ENCODE measurements at regions of chr2 and their contacts with region 1.

Region 1: GRCh38 chr2:177263451-177264208 is 897 bp downstream of the NFE2L2 start:
- DNase-seq: peak; percentile 97
- H3K4me3 ChIP-seq: peak overlapping the region; percentile 78
- H3K27ac ChIP-seq: peak overlapping the region; percentile 94
- H3K4me1 ChIP-seq: peaks cover 38% of the 10 kb centered on the region
- CTCF ChIP-seq: peak; percentile 82

Region 2: GRCh38 chr2:177212106-177212890 is 51.3 kb before region 1 on chr2 and contains the start of gene HNRNPA3:
- CTCF ChIA-PET with region 1: no interaction called
- POLR2A ChIA-PET with region 1: interaction called, 18 read pairs
- intact Hi-C with region 1: loop called (anchors 1 kb)
- DNase-seq: peak; percentile 98
- H3K4me3 ChIP-seq: peak within 1 kb of the TSS; percentile 81
- H3K27ac ChIP-seq: peak within 1 kb of the TSS; percentile 87
- H3K4me1 ChIP-seq: peaks cover 35% of the 10 kb centered on the region
- CTCF ChIP-seq: peak; percentile 47; the same call in 1 of the 2 replicates
- total RNA-seq, gene HNRNPA3: 68.2 and 82.2 TPM in 2 replicates

Region 3: DNA sequence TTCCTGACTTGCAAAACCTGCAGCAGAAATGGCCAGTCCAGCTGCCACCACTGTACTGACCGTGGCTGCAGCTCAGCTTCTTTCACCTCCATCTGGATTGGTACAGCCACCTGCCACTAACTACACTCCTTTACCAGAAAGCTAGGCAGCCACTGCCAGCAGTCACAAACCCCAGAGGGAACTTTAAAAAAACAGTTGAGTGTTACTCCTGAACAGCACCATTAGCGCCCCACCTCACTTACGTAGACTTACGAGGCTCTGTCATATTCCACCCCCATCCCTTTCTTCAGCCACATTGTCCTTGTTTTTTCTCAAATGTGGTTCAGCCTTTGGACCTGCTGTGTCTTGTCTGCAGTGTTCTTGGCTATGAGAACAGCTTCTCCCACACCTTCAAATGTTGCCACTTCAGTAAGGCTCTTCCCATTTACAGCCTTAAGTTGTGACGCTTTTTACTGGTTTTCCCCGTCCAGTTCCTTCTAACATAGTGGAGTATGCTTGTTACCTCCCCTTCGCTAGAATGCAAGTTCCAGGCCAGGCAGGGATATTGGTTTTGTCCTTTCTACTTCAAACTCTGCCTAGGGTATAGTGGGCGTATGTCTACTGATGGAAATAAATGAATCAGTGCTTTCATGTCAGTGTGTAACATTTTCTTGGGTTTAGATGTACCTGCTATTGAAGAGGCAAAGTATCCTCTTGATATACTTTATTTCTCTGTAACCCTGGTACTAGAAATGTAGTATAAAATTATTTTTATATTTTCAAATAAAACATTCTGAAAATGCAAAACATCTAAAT is 34.0 kb before region 1 on chr2:
- CTCF ChIA-PET with region 1: no interaction called
- POLR2A ChIA-PET with region 1: interaction called, 5 read pairs
- intact Hi-C with region 1: loop called (anchors 5 kb)
- DNase-seq: no peak
- H3K4me3 ChIP-seq: no peak overlapping the region
- H3K27ac ChIP-seq: no peak overlapping the region
- H3K4me1 ChIP-seq: peaks cover 6% of the 10 kb centered on the region
- CTCF ChIP-seq: no peak

Region 4: GRCh38 chr2:177296040-177296439 is 32.4 kb after region 1 on chr2:
- CTCF ChIA-PET with region 1: interaction called, 3 read pairs
- POLR2A ChIA-PET with region 1: interaction called, 6 read pairs
- intact Hi-C with region 1: loop called (anchors 1 kb)
- DNase-seq: peak; percentile 47
- H3K4me3 ChIP-seq: no peak overlapping the region
- H3K27ac ChIP-seq: no peak overlapping the region
- H3K4me1 ChIP-seq: peaks cover 5% of the 10 kb centered on the region
- CTCF ChIP-seq: peak; percentile 80

Region 5: GRCh38 chr2:177332041-177332991 is 68.7 kb after region 1 on chr2:
- CTCF ChIA-PET with region 1: interaction called, 4 read pairs
- POLR2A ChIA-PET with region 1: interaction called, 7 read pairs
- intact Hi-C with region 1: loop called (anchors 1 kb)
- DNase-seq: peak; percentile 74
- H3K4me3 ChIP-seq: no peak overlapping the region
- H3K27ac ChIP-seq: no peak overlapping the region
- H3K4me1 ChIP-seq: peaks cover 8% of the 10 kb centered on the region
- CTCF ChIP-seq: peak; percentile 86

Region 6: GRCh38 chr2:177353187-177353478 is 89.5 kb after region 1 on chr2:
- CTCF ChIA-PET with region 1: no interaction called
- POLR2A ChIA-PET with region 1: no interaction called
- intact Hi-C with region 1: no loop called
- DNase-seq: no peak
- H3K4me3 ChIP-seq: no peak overlapping the region
- H3K27ac ChIP-seq: no peak overlapping the region
- H3K4me1 ChIP-seq: no peaks in the 10 kb centered on the region
- CTCF ChIP-seq: no peak

Region 7: DNA sequence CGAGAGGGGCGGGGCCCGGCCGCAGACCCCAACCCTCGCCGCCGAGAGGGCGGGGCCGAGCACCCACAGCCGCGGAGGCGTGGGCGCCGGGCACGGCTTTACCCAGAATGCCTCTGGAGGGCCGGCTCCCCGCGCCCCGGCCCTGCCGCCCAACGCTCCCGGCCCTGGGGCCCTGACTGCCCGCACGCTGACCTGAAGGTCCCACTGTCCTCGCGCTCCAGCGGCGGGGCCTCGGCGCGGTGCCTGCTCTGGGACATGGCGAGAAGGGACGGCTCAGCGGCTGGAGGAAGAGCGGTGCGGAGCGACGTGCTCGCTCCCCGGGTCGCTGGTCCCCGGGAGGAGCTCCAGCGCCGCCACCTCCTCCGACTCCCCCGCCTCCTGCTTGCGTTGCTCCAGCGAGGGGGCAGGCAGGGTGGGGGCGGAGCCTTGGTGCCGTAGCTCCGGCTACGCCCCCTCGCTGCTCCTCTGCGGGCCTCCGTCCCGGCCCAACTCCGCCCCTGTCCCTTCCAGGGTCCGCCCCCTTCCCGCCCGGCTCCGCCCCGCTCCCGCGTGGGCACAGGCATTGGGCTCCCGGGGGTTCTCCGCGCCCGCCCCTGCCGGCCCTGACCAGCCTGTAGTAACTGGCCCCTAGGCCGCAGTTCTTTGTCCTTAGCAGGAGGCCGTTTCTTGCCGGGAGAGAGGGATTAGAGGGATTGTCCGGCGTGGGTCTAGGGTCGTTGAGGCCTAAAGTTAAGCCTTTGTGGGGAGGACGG is 1187.3 kb after region 1 on chr2 and contains the starts of genes PJVK and PRKRA:
- CTCF ChIA-PET with region 1: no interaction called
- POLR2A ChIA-PET with region 1: no interaction called
- intact Hi-C with region 1: loop called (anchors 10 kb)
- DNase-seq: peak; percentile 96
- H3K4me3 ChIP-seq: peak within 1 kb of the TSS; percentile 82
- H3K27ac ChIP-seq: peak within 1 kb of the TSS; percentile 85
- H3K4me1 ChIP-seq: peaks cover 23% of the 10 kb centered on the region
- CTCF ChIP-seq: no peak
- total RNA-seq, gene PJVK: 2.2 and 4.0 TPM in 2 replicates
- total RNA-seq, gene PRKRA: 68.7 and 79.5 TPM in 2 replicates

Measured in OCI-LY7 (cell line).